Activated B cell treated with CpG ODN at 0.5 μM for 24 hours (primary cell): ENCODE measurements at regions of chr11 and their contacts with region 1.

Region 1: GRCh38 chr11:59207988-59208451 is 4.7 kb downstream of the MPEG1 start:
- DNase-seq: no peak
- ATAC-seq: peak; percentile 45
- H3K4me3 Mint-ChIP-seq: peak overlapping the region; percentile 98
- H3K27ac Mint-ChIP-seq: peak overlapping the region; percentile 93
- H3K4me1 Mint-ChIP-seq: peaks cover 93% of the 10 kb centered on the region
- H3K27me3 Mint-ChIP-seq: no peaks in the 10 kb centered on the region
- CTCF ChIP-seq: no peak

Region 2: DNA sequence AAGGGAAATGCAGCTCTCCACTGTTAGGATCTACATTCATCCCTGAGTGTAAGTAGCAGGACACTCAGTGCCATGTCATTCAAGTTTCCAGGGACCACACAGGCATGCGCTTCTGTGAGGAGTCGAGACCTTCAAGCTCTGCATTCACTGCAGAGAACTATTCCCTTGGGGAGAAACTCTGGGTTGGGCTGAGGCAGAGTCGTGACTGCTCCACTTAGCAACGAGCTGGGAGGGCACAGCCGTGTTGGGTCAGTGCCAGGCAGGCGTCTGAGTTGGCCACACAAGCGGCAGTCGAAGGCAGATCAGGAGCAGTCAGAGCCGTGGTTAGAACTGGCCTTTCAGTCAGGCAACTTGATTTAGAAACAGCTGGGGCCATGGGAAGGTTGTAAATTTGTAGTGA is 10.0 kb before region 1 on chr11:
- CTCF ChIA-PET with region 1: interaction called, 11 read pairs
- POLR2A ChIA-PET with region 1: interaction called, 51 read pairs
- intact Hi-C with region 1: loop called (anchors 1 kb)
- DNase-seq: no peak
- ATAC-seq: peak; percentile 26
- H3K4me3 Mint-ChIP-seq: no peak overlapping the region
- H3K27ac Mint-ChIP-seq: peak overlapping the region; percentile 88
- H3K4me1 Mint-ChIP-seq: peaks cover 82% of the 10 kb centered on the region
- H3K27me3 Mint-ChIP-seq: no peaks in the 10 kb centered on the region
- CTCF ChIP-seq: no peak

Region 3: DNA sequence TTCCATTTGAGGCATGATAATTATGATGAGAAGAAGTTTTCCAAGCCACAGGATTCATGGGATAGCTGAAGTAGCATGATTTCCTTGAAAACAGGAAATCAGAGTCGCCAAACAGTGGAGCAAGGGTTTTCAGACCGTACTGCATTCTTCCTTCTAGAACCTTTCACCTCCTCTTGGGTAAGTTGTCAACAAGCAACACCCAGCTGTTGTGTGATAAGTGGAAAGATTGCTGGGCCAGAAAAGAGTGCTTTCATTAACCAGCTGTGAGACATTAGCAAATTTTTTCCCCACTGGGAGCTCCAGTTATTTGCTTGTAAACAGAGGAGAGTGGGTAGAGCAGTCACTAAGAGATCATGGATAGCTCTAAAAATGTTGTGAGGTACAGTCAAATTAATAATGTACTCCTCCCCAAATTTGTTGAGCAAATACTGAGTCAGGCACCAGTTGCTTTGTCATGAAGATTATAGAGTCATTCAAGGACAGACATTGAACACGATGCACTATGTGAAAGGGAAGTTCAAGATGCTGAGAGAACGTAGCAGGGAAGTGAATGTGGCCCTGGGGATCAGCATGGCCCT is 16.4 kb after region 1 on chr11:
- CTCF ChIA-PET with region 1: interaction called, 12 read pairs
- POLR2A ChIA-PET with region 1: interaction called, 67 read pairs
- intact Hi-C with region 1: loop called (anchors 2 kb)
- DNase-seq: no peak
- ATAC-seq: peak; percentile 65
- H3K4me3 Mint-ChIP-seq: peak overlapping the region; percentile 16
- H3K27ac Mint-ChIP-seq: peak overlapping the region; percentile 81
- H3K4me1 Mint-ChIP-seq: peaks cover 59% of the 10 kb centered on the region
- H3K27me3 Mint-ChIP-seq: no peaks in the 10 kb centered on the region
- CTCF ChIP-seq: no peak